Dorsolateral prefrontal cortex (tissue), 120 donors: ENCODE measurements at regions of chr12 and their contacts with region 1.

Region 1: DNA sequence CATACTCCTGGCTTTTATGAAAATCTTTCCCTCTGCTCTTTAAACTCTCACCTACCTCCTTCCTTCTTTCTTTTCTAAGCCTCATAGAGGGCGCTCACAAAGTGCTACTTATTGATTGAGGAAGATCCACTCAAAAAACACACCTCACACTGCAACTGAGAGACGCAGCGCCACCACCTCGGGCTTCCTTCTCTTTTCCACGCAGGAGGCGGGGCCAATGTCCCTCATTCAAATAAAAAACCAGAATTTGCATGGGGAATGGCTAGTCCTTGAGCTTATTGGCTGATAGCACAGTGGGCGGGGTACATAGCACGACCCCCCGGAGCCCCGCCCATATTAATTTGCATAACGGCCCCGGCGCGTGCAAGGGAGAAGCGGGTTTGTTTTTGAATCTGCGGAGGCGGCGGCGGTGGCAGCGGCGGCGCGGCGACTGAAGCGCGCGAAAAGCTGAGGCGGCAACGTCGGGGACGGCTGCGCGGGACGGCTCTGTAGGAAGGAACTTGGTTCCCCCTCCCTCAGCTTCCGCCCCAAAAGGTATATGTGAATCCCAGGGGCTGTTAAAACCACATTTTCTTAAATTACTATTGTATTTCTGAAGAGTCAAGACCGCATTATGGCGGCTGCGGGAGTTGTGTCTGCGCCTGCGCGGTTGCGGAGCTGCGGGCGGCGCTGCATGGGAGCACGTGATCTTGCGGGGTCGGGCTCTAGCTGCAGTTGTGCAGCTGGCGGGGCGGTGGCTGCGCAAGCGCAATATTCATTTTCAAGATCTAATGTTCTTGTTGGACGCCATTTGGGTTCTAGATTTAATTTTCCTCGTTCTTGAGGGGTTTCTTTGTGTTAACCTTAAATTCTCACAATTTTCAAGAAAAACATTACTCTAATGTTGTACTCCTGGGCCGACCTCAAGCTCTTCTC is at the start of gene ATF7IP:
- DNase-seq: peak; percentile 84 to 97 (median 92)
- H3K4me3 ChIP-seq: peak within 1 kb of the TSS; percentile 60 to 93 (median 77)
- H3K27ac ChIP-seq: peak within 1 kb of the TSS; percentile 95 to 100 (median 99)
- H3K27me3 ChIP-seq: no peaks in the 10 kb centered on the region
- CTCF ChIP-seq: peak; percentile 37 to 76 (median 65)
- total RNA-seq, gene ATF7IP: 49.2 to 99.3 (median 71.5) TPM

Region 2: DNA sequence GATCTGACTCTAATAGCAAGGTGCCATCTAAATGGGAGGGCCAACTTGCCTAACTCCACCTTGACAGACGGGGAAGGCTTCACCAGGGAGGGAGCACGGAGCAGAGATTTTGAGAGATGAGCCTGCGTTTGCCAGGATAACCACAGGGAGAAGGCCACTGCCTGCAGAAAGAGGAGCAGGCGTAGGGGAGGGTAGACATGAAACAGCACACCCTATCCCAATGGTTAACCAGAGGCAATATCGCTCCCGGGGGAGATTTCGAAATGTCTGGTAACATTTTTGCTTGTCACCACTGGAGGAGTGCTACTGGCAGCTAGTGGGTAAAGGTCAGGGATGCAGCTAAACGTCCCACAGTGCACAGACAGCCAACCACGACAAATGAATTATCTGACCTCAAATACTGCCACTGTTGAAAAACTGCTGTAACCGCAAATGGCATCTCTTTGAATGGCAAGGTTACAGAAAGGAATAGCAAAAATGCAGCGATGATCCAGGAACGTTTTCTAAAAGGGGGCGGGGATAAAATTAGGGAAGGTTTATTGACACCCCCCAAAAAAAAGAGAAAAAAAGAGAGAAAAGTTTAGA is 126.1 kb before region 1 on chr12:
- intact Hi-C with region 1: loop called in 1 of 2 experiments (anchors 5 kb)
- DNase-seq: peak in 1 of 10 donors; percentile 12
- H3K4me3 ChIP-seq: peak overlapping the region in 13 of 59 donors; percentile 0 to 34 (median 12)
- H3K27ac ChIP-seq: peak overlapping the region in 17 of 59 donors; percentile 1 to 46 (median 25)
- H3K27me3 ChIP-seq: no peaks in the 10 kb centered on the region
- CTCF ChIP-seq: peak in 4 of 56 donors; percentile 3 to 27 (median 14)

Region 3: DNA sequence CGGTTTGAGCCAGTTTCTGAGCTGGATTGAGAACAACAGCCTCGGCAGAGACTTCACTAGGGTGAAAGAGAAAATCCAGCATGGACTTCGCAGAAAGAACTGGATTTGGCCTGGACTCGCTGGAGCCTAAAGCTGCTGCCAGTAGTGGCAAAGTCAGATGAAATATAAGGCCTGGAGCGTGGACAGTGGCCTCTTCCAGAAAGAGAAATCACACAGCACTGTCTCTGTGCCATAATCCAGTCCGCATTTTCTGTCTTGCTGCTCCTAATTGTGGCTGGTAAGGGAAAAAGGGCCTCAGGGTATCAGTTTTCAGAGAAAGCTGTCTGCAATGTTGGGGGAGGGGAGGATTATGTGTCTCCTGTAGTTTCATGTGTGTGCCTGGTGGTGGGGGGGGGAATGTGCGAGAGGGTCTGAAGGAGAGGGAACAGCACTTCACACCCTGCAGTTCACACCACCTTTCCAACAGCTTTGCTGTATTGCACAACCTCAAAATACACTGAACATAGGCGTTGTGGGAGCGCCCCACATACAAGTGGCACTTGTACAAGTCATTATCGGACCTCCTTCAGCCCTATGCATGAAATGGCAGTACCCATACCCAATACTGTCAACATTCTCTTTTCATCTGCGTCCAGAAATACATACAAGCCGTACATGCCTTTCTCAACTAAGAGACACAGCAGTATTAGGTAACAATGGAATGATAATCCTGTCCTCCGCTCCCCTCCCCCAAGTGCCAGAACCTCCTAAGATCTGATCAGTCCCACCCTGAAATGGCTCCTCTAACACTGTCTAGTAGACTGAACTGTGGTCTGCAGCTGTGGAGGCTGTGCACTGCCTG is 107.6 kb before region 1 on chr12:
- intact Hi-C with region 1: loop called (anchors 1 to 2 kb)
- DNase-seq: peak in 8 of 10 donors; percentile 81 to 98 (median 88)
- H3K4me3 ChIP-seq: peak overlapping the region in 31 of 59 donors; percentile 1 to 53 (median 34)
- H3K27ac ChIP-seq: peak overlapping the region; percentile 75 to 98 (median 94)
- H3K27me3 ChIP-seq: no peaks in the 10 kb centered on the region
- CTCF ChIP-seq: peak in 11 of 56 donors; percentile 2 to 39 (median 15)

Region 4: GRCh38 chr12:14327711-14328381 is 37.7 kb before region 1 on chr12:
- intact Hi-C with region 1: no loop called
- DNase-seq: no peak
- H3K4me3 ChIP-seq: no peak overlapping the region
- H3K27ac ChIP-seq: no peak overlapping the region
- H3K27me3 ChIP-seq: no peaks in the 10 kb centered on the region
- CTCF ChIP-seq: no peak

Region 5: DNA sequence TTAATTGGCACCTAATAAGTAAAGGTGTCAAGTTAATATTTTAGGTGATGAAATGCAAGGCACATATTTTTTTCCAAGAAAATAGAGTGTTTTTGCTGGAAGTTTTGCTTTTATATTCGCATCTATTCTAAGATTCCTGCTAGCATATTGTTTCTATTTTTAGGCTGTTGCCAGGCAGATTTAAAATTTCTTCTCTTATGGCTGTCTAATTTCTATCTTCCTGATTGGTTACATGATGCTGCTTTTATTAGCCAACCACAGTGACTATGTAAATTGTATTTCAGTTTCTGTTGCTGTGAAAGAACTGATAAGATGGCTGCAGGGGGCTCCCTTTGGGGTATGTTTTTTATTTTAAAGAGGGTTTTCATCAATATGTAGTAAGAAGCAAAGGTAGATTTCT is 42.7 kb after region 1 on chr12:
- intact Hi-C with region 1: loop called in 1 of 2 experiments (anchors 5 kb)
- DNase-seq: no peak
- H3K4me3 ChIP-seq: peak overlapping the region in 48 of 59 donors; percentile 0 to 59 (median 37)
- H3K27ac ChIP-seq: peak overlapping the region in 31 of 59 donors; percentile 3 to 75 (median 32)
- H3K27me3 ChIP-seq: no peaks in the 10 kb centered on the region
- CTCF ChIP-seq: no peak

Region 6: DNA sequence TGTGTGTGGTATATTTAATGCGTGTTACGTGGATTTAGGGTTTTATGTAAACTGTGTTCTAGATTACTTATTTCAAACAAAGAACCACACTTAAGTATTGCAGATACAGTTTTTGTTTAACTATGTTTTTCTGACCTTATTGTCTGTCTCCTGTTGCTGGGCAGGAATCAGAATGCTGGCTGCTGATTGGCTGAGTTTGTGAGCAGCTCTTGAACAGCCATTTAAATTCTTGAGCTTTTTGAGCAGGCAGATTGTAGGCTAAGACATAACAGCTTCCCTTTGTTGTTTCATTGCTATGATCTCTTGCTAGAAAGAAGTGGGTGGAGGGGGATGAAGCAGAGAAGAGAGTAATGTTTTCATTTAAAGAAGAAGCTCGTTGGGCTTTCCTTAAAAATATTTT is 52.2 kb after region 1 on chr12:
- intact Hi-C with region 1: loop called in 1 of 2 experiments (anchors 5 kb)
- DNase-seq: peak; percentile 57 to 92 (median 74)
- H3K4me3 ChIP-seq: peak overlapping the region in 54 of 59 donors; percentile 2 to 62 (median 38)
- H3K27ac ChIP-seq: peak overlapping the region in 58 of 59 donors; percentile 5 to 86 (median 69)
- H3K27me3 ChIP-seq: no peaks in the 10 kb centered on the region
- CTCF ChIP-seq: peak in 4 of 56 donors; percentile 16 to 28 (median 23)

Region 7: DNA sequence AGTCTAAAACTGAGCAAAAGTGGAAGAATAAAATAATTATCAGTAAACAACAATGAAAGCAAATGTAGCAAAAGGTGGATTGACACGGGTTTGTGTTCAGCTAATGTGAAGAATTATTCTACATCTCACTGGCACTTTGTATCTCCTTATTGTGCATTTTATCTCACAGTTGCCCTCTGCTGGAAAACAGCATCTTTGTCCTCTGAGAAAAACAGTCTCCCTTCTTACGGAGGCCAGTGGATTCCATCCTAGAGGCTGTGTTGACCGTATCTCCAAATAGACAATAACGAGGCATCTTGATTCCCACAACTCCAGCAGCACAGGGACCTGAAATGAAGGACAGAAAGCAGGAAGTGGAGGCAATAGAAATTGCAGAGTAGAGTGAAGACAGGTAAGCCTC is 253.4 kb after region 1 on chr12:
- intact Hi-C with region 1: loop called in 1 of 2 experiments (anchors 10 kb)
- DNase-seq: peak in 1 of 10 donors; percentile 19
- H3K4me3 ChIP-seq: no peak overlapping the region
- H3K27ac ChIP-seq: no peak overlapping the region
- H3K27me3 ChIP-seq: no peaks in the 10 kb centered on the region
- CTCF ChIP-seq: peak in 54 of 56 donors; percentile 19 to 72 (median 46)